Natural killer cell (primary cell): ENCODE measurements at regions of chr1 and their contacts with region 1.

Region 1: GRCh38 chr1:18972531-18972930 is 16.1 kb upstream of the IFFO2 start:
- DNase-seq: peak in 1 of 2 donors; percentile 75
- ATAC-seq: peak; percentile 56 to 77 (median 73)
- H3K4me3 ChIP-seq: no peak overlapping the region
- H3K4me3 Mint-ChIP-seq: no peak overlapping the region
- H3K27ac ChIP-seq: no peak overlapping the region
- H3K27ac Mint-ChIP-seq: no peak overlapping the region
- H3K4me1 ChIP-seq: no peaks in the 10 kb centered on the region
- H3K4me1 Mint-ChIP-seq: peaks cover 0 to 4% of the 10 kb centered on the region in 2 donors
- H3K27me3 ChIP-seq: no peaks in the 10 kb centered on the region
- H3K27me3 Mint-ChIP-seq: peaks cover 5 to 8% of the 10 kb centered on the region in 2 donors
- CTCF ChIP-seq: peak; percentile 64

Region 2: GRCh38 chr1:18883636-18884418 is 88.7 kb before region 1 on chr1:
- intact Hi-C with region 1: loop called (anchors 1 kb)
- DNase-seq: peak; percentile 66 to 83
- ATAC-seq: peak; percentile 65 to 91 (median 88)
- H3K4me3 ChIP-seq: no peak overlapping the region
- H3K4me3 Mint-ChIP-seq: no peak overlapping the region
- H3K27ac ChIP-seq: no peak overlapping the region
- H3K27ac Mint-ChIP-seq: no peak overlapping the region
- H3K4me1 ChIP-seq: no peaks in the 10 kb centered on the region
- H3K4me1 Mint-ChIP-seq: no peaks in the 10 kb centered on the region
- H3K27me3 ChIP-seq: no peaks in the 10 kb centered on the region
- H3K27me3 Mint-ChIP-seq: no peaks in the 10 kb centered on the region
- CTCF ChIP-seq: peak; percentile 88